HepG2 (cell line): ENCODE measurements at regions of chr7 and their contacts with region 1.

Region 1: GRCh38 chr7:35424869-35425495 is 171.1 kb upstream of the TBX20 start:
- DNase-seq: peak; percentile 41
- ATAC-seq: peak; percentile 94
- H3K4me3 ChIP-seq: no peak overlapping the region
- H3K27ac ChIP-seq: no peak overlapping the region
- H3K4me1 ChIP-seq: no peaks in the 10 kb centered on the region
- H3K27me3 ChIP-seq: peaks cover 0 to 2% of the 10 kb centered on the region in 2 experiments; a peak in 1 of 5 replicates
- CTCF ChIP-seq: peak; percentile 73
- EP300 ChIP-seq: no peak
- POLR2A ChIP-seq: no peak
- RAD21 ChIP-seq: no peak

Region 2: GRCh38 chr7:35519971-35520809 is 95.2 kb after region 1 on chr7:
- CTCF ChIA-PET with region 1: interaction called, 17 read pairs
- POLR2A ChIA-PET with region 1: no interaction called
- in situ Hi-C with region 1: no loop called
- intact Hi-C with region 1: loop called (anchors 1 kb)
- DNase-seq: peak; percentile 45
- ATAC-seq: peak; percentile 88
- H3K4me3 ChIP-seq: no peak overlapping the region
- H3K27ac ChIP-seq: no peak overlapping the region
- H3K4me1 ChIP-seq: no peaks in the 10 kb centered on the region
- H3K27me3 ChIP-seq: no peaks in the 10 kb centered on the region; a peak in 1 of 5 replicates
- CTCF ChIP-seq: peak; percentile 87
- EP300 ChIP-seq: no peak
- POLR2A ChIP-seq: no peak
- RAD21 ChIP-seq: peak; percentile 79

Region 3: GRCh38 chr7:35530124-35531109 is 105.4 kb after region 1 on chr7:
- CTCF ChIA-PET with region 1: no interaction called
- POLR2A ChIA-PET with region 1: no interaction called
- in situ Hi-C with region 1: loop called (anchors 5 kb)
- intact Hi-C with region 1: no loop called
- DNase-seq: no peak
- ATAC-seq: no peak
- H3K4me3 ChIP-seq: no peak overlapping the region
- H3K27ac ChIP-seq: no peak overlapping the region
- H3K4me1 ChIP-seq: no peaks in the 10 kb centered on the region
- H3K27me3 ChIP-seq: 0 out of 5 replicates have a peak, but pooled peaks cover 0 to 4% of the 10 kb centered on the region in 2 experiments
- CTCF ChIP-seq: no peak
- EP300 ChIP-seq: no peak
- POLR2A ChIP-seq: no peak
- RAD21 ChIP-seq: no peak

Region 4: GRCh38 chr7:35537067-35538023 is 112.4 kb after region 1 on chr7:
- CTCF ChIA-PET with region 1: interaction called, 14 read pairs
- POLR2A ChIA-PET with region 1: no interaction called
- in situ Hi-C with region 1: loop called (anchors 5 kb)
- intact Hi-C with region 1: loop called (anchors 1 kb)
- DNase-seq: peak; percentile 46
- ATAC-seq: peak; percentile 96
- H3K4me3 ChIP-seq: peak overlapping the region in 2 of 3 experiments; percentile 35 to 51; a peak in 4 of 6 replicates
- H3K27ac ChIP-seq: no peak overlapping the region
- H3K4me1 ChIP-seq: peaks cover 13% of the 10 kb centered on the region
- H3K27me3 ChIP-seq: peaks cover 0 to 22% of the 10 kb centered on the region in 2 experiments; a peak in 2 of 5 replicates
- CTCF ChIP-seq: peak; percentile 98
- EP300 ChIP-seq: no peak
- POLR2A ChIP-seq: no peak
- RAD21 ChIP-seq: peak; percentile 91

Region 5: GRCh38 chr7:35624299-35625186 is 199.6 kb after region 1 on chr7:
- CTCF ChIA-PET with region 1: interaction called, 17 read pairs
- POLR2A ChIA-PET with region 1: no interaction called
- in situ Hi-C with region 1: loop called (anchors 5 kb)
- intact Hi-C with region 1: loop called (anchors 1 kb)
- DNase-seq: peak; percentile 31
- ATAC-seq: peak; percentile 93
- H3K4me3 ChIP-seq: peak overlapping the region in 1 of 3 experiments; percentile 17; a peak in 1 of 6 replicates
- H3K27ac ChIP-seq: no peak overlapping the region
- H3K4me1 ChIP-seq: peaks cover 7% of the 10 kb centered on the region
- H3K27me3 ChIP-seq: no peaks in the 10 kb centered on the region
- CTCF ChIP-seq: peak; percentile 87
- EP300 ChIP-seq: no peak
- POLR2A ChIP-seq: no peak
- RAD21 ChIP-seq: peak; percentile 77